ENCODE measurements at regions of chr4 and their contacts with region 1.

Region 1: DNA sequence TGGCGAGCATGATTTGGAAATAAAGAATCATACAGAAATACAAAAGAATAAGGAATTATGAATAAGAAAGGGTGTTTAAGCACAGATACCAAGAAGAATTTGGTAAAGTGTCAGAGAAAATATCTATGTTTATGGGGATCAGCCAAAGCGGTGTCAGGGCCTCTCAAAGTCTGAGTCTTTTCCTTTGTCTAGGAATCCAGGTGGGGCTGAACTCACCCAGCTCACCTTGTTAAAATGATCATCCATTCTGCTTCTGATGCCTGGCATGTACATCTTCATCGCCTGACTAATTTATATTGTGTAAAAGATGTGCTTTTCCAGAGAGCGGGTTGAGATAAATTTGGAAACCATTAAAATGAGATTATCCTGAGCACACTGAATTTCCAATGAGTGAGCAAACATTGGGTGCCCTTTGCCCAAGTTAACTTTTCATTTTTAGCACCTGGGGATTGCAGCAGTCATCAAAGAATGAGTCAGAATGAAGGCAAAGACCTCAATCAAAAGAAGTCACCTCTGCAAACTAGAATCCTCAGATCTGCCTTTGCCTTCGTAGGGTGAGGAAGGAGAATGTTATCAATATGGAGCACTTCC is 141.9 kb upstream of the ANXA3 start:
- DNase-seq: no peak
- H3K4me3 ChIP-seq: no peak overlapping the region
- H3K27ac ChIP-seq: no peak overlapping the region
- H3K4me1 ChIP-seq: no peaks in the 10 kb centered on the region
- H3K27me3 ChIP-seq: no peaks in the 10 kb centered on the region
- CTCF ChIP-seq: no peak
- POLR2A ChIP-seq: no peak

Region 2: GRCh38 chr4:78584863-78585547 is 175.3 kb after region 1 on chr4:
- intact Hi-C with region 1: loop called (anchors 5 kb)
- DNase-seq: no peak
- H3K4me3 ChIP-seq: no peak overlapping the region
- H3K27ac ChIP-seq: no peak overlapping the region
- H3K4me1 ChIP-seq: no peaks in the 10 kb centered on the region
- H3K27me3 ChIP-seq: no peaks in the 10 kb centered on the region
- CTCF ChIP-seq: no peak
- POLR2A ChIP-seq: no peak

Measured in vagina (tissue), 2 donors.